ENCODE measurements at regions of chr4 and their contacts with region 1.

Region 1: GRCh38 chr4:152590179-152591031 is 54.5 kb upstream of the FBXW7 start:
- DNase-seq: no peak
- H3K4me3 ChIP-seq: no peak overlapping the region
- H3K27ac ChIP-seq: no peak overlapping the region
- H3K4me1 ChIP-seq: peaks cover 7% of the 10 kb centered on the region
- CTCF ChIP-seq: no peak

Region 2: DNA sequence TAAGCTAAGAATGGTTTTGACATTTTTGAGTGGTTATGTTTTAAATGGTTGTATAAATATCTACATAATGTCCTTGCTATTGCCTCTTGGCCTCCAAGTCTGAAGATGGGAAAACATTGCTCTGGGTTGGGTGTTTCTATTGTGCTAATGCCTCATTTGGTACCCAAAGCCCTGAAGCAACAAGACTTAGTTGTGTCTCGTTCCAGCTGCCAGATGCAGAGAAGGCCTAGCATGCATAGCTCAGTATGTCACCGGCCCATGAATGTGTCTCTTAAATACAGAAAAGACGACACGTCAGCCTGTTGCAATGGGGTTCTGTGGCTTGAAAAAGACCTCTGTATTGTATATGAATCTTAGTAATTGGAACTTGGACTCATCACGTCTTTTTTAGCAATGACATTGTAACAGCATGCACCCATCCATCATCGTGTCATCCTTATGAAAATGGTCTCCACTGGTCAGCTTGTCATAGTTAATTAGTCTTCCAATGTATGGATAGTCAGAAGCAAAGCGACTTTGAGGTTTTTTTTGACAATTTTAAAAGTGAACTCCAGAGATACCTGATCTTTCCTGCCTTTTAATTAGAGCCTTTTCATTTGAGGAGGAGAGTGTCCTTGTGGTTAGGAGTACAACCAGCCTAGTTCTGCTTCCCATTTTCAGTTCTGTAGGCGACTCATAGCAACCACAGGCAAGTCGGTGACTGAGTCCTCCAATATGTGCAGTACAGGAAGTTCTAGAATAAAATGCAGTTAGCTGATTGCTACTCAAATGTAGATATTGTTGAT is 703.2 kb before region 1 on chr4:
- CTCF ChIA-PET with region 1: no interaction called
- POLR2A ChIA-PET with region 1: no interaction called
- intact Hi-C with region 1: no loop called
- DNase-seq: no peak
- H3K4me3 ChIP-seq: no peak overlapping the region
- H3K27ac ChIP-seq: no peak overlapping the region
- H3K4me1 ChIP-seq: no peaks in the 10 kb centered on the region
- CTCF ChIP-seq: no peak

Region 3: GRCh38 chr4:152606754-152607153 is 16.3 kb after region 1 on chr4:
- CTCF ChIA-PET with region 1: interaction called, 4 read pairs
- POLR2A ChIA-PET with region 1: interaction called, 26 read pairs
- intact Hi-C with region 1: no loop called
- DNase-seq: no peak
- H3K4me3 ChIP-seq: no peak overlapping the region
- H3K27ac ChIP-seq: no peak overlapping the region
- H3K4me1 ChIP-seq: no peaks in the 10 kb centered on the region
- CTCF ChIP-seq: no peak

Region 4: GRCh38 chr4:153095448-153096204 is 505.2 kb after region 1 on chr4:
- CTCF ChIA-PET with region 1: no interaction called
- POLR2A ChIA-PET with region 1: no interaction called
- intact Hi-C with region 1: no loop called
- DNase-seq: no peak
- H3K4me3 ChIP-seq: no peak overlapping the region
- H3K27ac ChIP-seq: no peak overlapping the region
- H3K4me1 ChIP-seq: no peaks in the 10 kb centered on the region
- CTCF ChIP-seq: no peak

Measured in OCI-LY7 (cell line).